Dorsolateral prefrontal cortex (tissue), 120 donors: ENCODE measurements at regions of chr13 and their contacts with region 1.

Region 1: DNA sequence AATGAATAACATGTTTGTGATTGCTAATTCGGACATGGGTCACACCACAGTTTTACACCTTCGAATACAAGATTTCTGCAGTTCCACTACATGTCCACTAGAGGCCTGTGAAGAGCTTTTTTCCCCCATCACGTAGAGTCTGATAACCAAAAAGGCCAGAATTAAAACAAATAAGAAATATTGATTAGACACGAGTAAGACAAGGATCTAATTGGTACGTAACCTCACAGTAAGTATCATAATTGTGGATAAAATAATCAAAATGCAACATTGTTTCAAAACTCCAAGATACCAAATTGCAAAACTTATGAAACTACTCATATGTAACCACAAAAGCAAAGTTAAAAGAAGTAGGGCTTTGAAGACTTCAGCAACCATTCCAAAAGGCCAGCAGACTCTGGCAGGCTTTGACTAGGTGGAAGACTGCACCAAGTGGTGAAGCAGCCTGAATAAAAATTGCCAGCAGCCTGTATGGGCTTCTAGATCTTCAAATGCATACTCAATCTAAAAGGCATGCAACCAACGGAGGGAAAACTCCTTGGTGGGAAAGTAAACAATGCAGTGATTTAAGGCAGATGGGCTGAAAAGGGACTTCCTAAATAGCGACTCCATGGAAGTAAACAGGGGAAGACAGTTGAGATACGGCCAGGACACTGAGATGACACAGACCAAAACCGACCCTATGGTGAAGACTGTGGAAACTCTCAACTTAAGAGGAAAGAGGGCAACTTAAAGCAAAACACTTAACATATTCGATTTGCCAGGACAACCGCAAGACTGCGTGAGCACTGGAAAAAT is 56.7 kb downstream of the STARD13 start:
- DNase-seq: no peak
- H3K4me3 ChIP-seq: peak overlapping the region in 42 of 59 donors; percentile 1 to 51 (median 21)
- H3K27ac ChIP-seq: peak overlapping the region; percentile 40 to 97 (median 91)
- H3K27me3 ChIP-seq: no peaks in the 10 kb centered on the region
- CTCF ChIP-seq: peak; percentile 73 to 95 (median 89)

Region 2: DNA sequence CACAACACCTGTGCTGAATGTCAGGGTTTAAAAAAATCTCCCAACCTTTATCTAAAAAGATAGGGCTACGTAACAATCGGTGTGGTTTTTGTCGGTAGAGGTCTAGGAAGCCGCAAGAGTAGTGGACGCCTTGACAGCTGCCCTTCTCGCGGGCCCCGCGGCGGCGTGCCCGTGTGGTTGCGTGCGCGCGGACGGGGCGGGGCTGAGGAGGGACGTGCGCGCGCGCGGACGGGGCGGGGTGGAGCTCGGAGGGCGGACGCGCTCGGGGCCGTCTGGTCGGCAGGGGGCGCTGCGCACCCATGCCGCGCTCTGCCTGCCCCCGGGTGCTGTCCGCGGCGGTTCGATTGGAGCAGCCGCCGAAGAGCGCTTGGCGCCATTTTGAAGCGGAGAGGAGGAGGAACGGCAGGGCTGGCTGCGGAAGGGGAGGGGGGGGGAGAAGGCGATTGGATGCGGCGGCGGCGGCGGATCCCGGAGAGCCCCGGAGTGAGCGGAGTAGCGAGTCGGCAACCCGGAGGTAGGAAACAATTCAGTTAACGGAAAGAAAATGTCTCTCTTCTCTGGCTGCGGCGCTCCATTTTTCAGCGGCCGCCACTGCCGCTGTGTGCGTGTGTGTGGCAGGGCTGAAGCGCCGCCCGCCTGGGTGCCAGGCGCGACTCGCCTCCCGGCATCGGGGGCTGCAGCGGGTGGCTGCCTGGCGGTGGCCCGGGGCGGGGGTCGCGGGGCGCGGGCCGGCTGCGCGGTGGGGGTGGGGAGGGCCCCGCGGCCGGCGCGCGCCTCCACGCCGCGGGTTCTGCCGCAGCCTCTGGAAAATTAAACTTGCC is 642.6 kb before region 1 on chr13 and contains the start of gene PDS5B:
- intact Hi-C with region 1: loop called in 1 of 2 experiments (anchors 5 kb)
- DNase-seq: peak; percentile 79 to 97 (median 92)
- H3K4me3 ChIP-seq: peak within 1 kb of the TSS; percentile 59 to 98 (median 82)
- H3K27ac ChIP-seq: peak within 1 kb of the TSS; percentile 83 to 99 (median 97)
- H3K27me3 ChIP-seq: no peaks in the 10 kb centered on the region
- CTCF ChIP-seq: peak; percentile 57 to 98 (median 90)
- total RNA-seq, gene PDS5B: 55.6 to 161 (median 108) TPM

Region 3: DNA sequence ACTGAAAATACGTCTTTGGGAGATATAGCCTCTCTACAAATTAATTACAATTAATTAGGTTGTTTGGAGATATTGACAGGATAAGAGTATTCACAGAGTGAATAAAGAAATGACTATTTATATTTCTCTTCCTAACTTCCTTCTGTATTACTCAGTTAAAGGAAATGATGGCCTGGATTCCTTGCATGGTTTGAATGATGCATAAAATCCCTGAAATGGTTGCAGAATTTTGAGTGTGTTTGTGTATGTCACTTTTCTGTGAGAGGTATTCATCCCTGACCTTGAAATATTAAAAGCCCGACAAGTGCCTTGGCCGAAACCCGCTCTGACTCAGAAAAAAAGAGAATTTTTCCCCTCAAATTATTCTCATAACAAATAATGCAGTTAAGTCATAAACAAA is 552.6 kb before region 1 on chr13:
- intact Hi-C with region 1: no loop called
- DNase-seq: no peak
- H3K4me3 ChIP-seq: no peak overlapping the region
- H3K27ac ChIP-seq: no peak overlapping the region
- H3K27me3 ChIP-seq: no peaks in the 10 kb centered on the region
- CTCF ChIP-seq: no peak

Region 4: GRCh38 chr13:33186861-33187291 is 42.0 kb before region 1 on chr13:
- intact Hi-C with region 1: no loop called
- DNase-seq: no peak
- H3K4me3 ChIP-seq: peak overlapping the region in 1 of 59 donors; percentile 13
- H3K27ac ChIP-seq: peak overlapping the region in 41 of 59 donors; percentile 2 to 76 (median 44)
- H3K27me3 ChIP-seq: no peaks in the 10 kb centered on the region
- CTCF ChIP-seq: no peak

Region 5: GRCh38 chr13:33262062-33262497 is 33.2 kb after region 1 on chr13:
- intact Hi-C with region 1: loop called (anchors 1 to 5 kb)
- DNase-seq: peak in 3 of 10 donors; percentile 33 to 65 (median 50)
- H3K4me3 ChIP-seq: peak overlapping the region in 24 of 59 donors; percentile 0 to 51 (median 26)
- H3K27ac ChIP-seq: peak overlapping the region; percentile 32 to 96 (median 91)
- H3K27me3 ChIP-seq: no peaks in the 10 kb centered on the region
- CTCF ChIP-seq: no peak

Region 6: GRCh38 chr13:33285420-33286124 is 56.7 kb after region 1 on chr13 and contains the start of gene STARD13:
- intact Hi-C with region 1: loop called in 1 of 2 experiments (anchors 2 kb)
- DNase-seq: peak; percentile 54 to 95 (median 92)
- H3K4me3 ChIP-seq: peak within 1 kb of the TSS; percentile 53 to 94 (median 76)
- H3K27ac ChIP-seq: peak within 1 kb of the TSS; percentile 27 to 97 (median 91)
- H3K27me3 ChIP-seq: no peaks in the 10 kb centered on the region
- CTCF ChIP-seq: peak in 51 of 56 donors; percentile 15 to 67 (median 45)
- total RNA-seq, gene STARD13: 42.3 to 91.6 (median 62.0) TPM

Region 7: GRCh38 chr13:33312150-33312860 is 83.5 kb after region 1 on chr13:
- intact Hi-C with region 1: loop called in 1 of 2 experiments (anchors 2 kb)
- DNase-seq: no peak
- H3K4me3 ChIP-seq: peak overlapping the region in 8 of 59 donors; percentile 1 to 37 (median 15)
- H3K27ac ChIP-seq: peak overlapping the region in 56 of 59 donors; percentile 0 to 81 (median 51)
- H3K27me3 ChIP-seq: no peaks in the 10 kb centered on the region
- CTCF ChIP-seq: peak; percentile 26 to 81 (median 66)

Region 8: DNA sequence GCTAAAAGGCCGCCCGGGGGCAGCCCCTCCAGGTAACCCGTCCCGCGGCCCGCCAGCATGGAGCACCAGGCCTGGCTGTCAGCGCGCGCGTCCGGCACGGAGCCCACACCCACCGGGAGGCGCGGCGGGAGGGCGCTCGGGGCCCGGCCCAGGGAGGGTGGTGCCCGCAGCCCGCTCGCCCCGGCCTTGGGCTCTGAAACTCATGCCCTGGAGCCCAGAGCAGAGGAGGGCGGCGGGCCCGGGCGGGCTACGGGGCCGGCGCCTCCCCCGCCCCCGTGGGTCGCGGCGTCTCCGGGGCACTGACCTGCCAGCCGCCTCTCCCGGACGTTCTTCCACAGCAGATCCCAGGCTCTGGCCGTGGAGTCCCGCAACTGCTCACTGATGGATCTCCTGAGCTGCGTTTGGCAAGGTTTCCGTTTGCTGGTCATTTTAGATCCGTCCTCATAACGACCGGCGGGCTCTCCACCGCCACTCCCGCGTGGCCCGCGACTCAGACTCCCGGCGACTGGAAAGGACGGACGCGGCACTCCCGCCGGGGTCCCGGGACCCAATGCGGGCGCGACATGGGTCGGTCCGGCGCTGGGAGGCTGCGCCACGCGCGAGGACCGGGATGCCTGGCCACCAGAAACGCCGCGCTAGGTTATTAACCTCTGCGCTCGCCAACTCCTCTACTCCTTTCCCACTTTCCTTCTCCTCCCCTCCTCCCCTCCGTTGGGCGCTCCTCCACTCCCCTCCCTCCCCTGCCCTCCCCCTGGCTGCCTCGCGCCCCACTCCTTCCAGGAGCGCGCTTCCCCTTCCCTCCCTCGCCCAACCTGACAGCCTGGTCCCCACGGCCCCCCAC is 121.4 kb after region 1 on chr13:
- intact Hi-C with region 1: no loop called
- DNase-seq: peak in 2 of 10 donors; percentile 10 to 53
- H3K4me3 ChIP-seq: peak overlapping the region; percentile 58 to 91 (median 79)
- H3K27ac ChIP-seq: peak overlapping the region in 55 of 59 donors; percentile 29 to 90 (median 73)
- H3K27me3 ChIP-seq: no peaks in the 10 kb centered on the region
- CTCF ChIP-seq: no peak

Region 9: DNA sequence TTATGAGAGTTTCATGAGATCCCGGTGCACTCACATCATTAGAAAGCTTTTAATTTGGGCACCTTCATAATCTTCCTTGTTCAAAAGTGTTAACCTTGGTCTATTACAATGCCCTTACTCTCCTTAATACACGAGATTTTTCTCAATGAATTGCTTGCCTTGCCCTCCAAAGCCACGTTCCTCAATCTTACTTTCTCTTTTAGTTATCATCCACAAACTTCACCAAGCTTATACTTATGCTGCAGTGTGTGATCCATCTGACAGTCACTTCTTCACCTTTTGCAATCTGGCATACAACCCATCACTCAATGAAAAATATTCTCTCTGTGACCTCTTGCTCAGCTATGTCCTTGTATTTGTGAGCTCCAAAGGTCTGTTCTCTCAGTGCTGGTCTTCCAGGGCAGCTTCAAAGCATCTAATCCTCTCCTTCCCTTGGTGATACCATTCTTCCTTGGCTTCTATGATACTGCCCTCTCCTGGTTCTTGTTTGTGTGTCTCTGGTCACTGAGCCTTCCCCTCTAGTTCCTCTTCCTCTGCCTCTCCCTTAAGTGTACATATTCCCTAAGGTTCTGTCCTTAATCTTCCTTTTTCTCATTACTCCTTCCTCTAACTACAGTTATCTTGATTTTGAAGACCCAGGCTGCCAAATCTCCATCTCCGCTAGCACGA is 258.9 kb after region 1 on chr13:
- intact Hi-C with region 1: loop called in 1 of 2 experiments (anchors 10 kb)
- DNase-seq: no peak
- H3K4me3 ChIP-seq: peak overlapping the region in 25 of 59 donors; percentile 4 to 44 (median 21)
- H3K27ac ChIP-seq: peak overlapping the region in 4 of 59 donors; percentile 31 to 53 (median 42)
- H3K27me3 ChIP-seq: no peaks in the 10 kb centered on the region
- CTCF ChIP-seq: peak in 55 of 56 donors; percentile 21 to 72 (median 50)